ENCODE measurements at regions of chr6 and their contacts with region 1.

Region 1: DNA sequence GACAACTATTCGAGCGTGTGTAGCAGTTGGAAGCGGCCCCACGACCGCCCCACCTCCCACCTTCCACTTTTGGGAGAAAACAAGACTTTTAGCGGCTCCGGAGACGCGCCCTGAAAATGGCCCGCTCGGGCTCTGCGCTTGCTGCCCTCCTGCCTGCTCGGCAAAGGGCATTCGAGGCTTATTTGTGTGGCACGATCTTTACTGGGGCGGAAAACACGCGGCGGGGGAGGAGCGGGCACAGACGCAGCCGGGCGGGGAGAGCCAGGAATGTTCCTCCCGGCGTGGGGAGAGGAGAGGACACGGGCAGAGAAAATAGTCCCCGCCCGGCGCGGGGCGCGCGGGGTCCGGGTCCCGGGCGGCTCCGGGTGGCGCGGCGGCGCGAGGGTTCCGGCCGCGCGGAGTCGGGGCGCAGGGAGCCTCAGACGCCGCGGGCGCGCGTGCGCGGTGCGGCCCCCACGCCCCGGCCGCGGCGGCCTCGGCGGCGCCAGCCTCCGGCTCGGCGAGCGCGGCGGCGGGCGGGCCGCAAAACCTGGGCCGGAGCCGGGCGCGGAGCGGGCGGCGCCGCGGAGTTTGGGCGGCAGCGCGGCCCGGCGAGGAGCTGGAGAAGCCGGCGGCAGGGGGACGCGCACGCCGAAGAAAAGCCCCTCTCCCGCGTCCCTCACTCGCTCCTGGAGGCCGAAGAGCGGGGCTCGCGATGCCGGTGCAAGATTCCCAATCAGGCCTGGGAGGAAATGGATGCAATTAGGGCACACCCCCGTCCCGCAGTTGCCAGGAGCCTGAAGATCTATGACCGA is 90.0 kb upstream of the ARID1B start:
- DNase-seq: peak; percentile 86 to 99 (median 91)

Region 2: DNA sequence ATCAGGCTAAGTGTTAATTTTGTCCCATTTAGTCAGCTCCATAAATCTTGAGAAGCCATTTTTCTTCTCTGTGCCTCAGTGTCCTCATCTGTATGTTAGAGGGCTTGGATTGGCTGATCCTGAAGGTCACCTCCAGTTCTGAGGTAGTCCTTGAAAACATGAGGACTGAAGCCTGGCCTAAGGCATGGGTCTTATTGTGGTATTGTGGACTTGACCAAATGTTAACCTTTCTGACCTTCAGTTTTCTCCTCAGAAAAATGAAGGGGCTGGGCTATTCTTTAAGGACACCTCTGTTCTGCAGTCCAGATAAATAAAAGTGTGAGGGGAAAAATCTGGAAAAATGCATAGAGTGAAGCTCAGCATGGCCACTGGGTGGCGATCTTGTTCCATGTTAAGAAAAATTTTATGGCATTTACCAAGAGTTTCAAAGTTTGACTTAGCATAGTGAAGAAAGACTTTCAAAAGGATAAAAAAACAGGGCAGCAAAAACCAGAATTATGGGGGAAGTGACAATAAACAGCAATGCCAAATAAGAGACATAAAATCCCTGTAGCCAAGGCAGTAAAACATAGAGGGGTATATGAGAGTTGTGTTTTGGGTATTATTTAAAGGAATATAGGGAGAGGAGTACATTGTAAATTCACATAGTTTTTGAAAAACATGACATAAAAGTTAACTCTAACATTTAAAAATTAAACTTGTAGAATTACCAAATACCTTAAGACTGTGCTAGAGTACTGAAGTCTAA is 1359.7 kb before region 1 on chr6:
- intact Hi-C with region 1: loop called (anchors 10 kb)
- DNase-seq: peak in 7 of 10 donors; percentile 34 to 86 (median 50)

Region 3: GRCh38 chr6:156564127-156564806 is 122.9 kb before region 1 on chr6:
- intact Hi-C with region 1: loop called (anchors 1 kb)
- DNase-seq: peak; percentile 67 to 97 (median 84)

Region 4: GRCh38 chr6:156776840-156777576 is 89.8 kb after region 1 on chr6 and contains the start of gene ARID1B:
- intact Hi-C with region 1: loop called (anchors 1 kb)
- DNase-seq: peak; percentile 69 to 96 (median 79)

Region 5: DNA sequence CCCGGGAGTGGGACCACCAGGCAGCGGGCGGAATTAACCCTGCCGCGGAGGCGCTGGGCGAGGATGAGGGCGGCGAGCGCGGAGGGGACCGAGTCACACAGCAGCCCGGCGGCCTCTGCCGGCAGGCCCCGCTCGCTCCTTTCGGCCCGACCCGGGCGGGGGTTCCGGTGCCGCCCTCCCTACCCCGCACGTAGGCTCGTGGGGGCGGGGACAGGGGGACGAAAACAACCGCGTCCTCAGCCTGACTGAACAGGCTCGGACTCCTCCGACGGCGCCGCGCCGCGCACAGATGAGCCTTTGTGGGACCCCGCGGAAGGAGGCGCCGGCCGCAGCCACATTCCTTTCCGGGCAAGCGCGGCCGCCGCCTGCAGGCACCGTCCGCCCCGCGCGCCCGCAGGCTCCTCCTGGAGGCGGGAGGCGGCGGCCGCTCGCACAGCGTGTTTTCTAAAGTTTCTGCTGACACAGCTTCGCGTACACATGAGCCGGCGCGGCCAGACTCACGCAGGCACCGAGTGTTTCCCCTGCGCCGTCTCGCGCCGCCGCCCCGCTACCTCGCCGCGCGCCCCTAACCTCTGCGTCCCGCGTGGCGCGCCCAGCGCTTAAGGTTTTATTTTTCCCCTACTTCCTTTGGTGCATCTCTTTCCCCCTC is 334.3 kb after region 1 on chr6:
- intact Hi-C with region 1: loop called (anchors 5 kb)
- DNase-seq: peak; percentile 84 to 98 (median 88)

Region 6: DNA sequence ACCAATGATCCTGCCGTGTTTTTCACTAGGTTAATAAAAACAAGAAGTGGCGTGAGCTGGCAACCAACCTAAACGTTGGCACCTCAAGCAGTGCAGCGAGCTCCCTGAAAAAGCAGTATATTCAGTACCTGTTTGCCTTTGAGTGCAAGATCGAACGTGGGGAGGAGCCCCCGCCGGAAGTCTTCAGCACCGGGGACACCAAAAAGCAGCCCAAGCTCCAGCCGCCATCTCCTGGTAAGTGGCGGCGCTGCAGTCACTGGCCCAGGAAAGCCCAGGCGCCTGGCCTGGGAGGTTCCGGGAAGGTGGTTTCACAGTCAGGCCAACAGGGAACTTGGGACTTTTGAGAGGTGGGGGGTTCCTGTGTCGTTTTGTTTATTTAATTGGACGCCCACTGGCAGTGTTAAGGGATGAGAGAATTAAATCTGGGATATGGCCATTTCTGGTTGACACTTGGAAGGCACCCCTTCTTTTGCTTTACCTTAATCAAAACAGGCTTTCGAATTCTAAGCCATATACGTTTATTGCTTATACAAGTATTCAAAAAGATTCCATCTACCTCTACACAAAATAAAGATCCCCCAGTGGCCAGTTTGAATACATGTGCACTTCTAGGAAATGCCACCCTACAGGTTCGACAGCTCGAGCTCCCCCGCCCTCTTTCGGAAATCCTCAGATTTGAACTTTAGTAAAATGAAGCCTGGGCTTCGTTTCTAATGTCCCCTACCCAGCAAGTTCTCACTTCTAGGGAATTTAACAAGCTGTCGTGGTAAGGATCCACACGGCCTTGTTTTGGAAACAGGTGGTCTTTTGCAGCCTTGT is 497.2 kb after region 1 on chr6:
- intact Hi-C with region 1: loop called (anchors 10 kb)
- DNase-seq: peak; percentile 54 to 96 (median 76)